AG04449 (cell line): ENCODE measurements at regions of chr6 and their contacts with region 1.

Region 1: DNA sequence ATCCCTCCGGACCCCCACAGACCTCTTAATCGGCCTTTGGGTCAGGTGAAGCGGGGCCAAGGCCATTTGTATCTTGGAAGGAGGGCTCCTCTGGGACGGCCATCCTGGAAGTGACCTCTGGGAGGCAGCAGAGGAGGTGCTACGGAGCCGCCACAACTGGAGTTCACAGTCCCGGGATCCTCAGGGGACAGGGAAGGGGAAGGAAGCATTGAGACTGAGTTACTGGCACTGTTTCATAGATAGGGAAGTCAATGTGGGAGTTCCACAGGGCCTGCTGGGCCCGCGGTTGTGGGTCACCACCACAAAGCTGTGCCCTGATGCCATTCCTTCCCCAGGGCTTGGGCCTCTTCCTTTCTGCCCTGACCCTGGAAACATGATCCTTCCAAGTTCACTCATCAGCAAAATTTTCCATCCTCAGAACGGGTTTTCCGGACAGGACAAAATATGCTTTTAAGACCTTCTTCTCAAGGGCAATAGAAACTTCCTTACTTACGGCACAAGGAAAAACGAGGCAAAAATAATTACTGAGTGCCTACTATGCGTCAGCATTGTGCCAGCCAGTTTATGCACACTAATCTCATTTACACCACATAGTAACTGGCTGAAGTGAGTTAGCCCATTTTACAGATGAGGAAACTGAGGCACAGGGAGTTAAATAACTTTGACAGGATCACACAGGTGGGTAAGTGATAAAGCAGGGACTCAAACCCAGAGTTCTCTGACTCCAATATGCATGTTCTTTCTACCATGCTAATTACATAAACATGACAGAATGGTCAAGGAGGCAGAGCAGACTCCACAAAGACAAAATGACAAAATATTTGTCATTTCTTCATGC is 143.8 kb downstream of the UNC5CL start:
- DNase-seq: no peak
- H3K4me3 ChIP-seq: no peak overlapping the region
- CTCF ChIP-seq: peak; percentile 90

Region 2: GRCh38 chr6:40308533-40309306 is 586.5 kb before region 1 on chr6:
- CTCF ChIA-PET with region 1: no interaction called
- POLR2A ChIA-PET with region 1: no interaction called
- DNase-seq: no peak
- H3K4me3 ChIP-seq: no peak overlapping the region
- CTCF ChIP-seq: peak; percentile 80

Region 3: DNA sequence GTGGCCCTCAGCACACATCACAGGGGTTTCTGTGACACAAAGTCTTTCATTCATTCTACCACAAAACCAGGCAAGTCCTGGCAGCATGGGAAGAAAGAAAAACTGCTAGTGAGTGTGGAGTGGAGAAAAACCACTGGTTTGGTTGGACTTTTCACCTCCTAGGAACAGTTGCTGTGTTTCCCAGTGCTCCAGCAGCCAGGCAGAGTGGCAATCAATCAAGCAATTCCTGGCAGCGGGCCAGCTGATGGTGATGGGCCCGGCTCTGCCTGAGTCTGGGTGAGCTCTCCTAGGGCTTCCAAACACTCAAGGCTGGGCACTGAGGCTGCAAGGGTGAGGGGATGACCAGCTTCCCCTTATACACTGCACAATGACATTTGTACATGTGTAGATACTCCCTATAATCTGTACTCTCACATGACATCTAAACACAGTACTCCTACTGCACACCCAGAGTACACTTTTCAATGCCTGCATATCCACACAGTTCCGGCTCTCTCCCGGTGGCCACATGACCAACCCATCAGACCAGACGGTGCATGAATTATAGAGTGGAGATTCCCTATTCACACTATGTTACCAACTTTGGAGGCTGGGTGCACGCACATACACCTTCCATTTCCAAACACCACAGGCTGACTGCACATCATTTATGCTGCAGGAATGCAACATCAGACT is 12.7 kb before region 1 on chr6:
- CTCF ChIA-PET with region 1: interaction called, 13 read pairs
- POLR2A ChIA-PET with region 1: no interaction called
- DNase-seq: no peak
- H3K4me3 ChIP-seq: no peak overlapping the region
- CTCF ChIP-seq: no peak

Region 4: DNA sequence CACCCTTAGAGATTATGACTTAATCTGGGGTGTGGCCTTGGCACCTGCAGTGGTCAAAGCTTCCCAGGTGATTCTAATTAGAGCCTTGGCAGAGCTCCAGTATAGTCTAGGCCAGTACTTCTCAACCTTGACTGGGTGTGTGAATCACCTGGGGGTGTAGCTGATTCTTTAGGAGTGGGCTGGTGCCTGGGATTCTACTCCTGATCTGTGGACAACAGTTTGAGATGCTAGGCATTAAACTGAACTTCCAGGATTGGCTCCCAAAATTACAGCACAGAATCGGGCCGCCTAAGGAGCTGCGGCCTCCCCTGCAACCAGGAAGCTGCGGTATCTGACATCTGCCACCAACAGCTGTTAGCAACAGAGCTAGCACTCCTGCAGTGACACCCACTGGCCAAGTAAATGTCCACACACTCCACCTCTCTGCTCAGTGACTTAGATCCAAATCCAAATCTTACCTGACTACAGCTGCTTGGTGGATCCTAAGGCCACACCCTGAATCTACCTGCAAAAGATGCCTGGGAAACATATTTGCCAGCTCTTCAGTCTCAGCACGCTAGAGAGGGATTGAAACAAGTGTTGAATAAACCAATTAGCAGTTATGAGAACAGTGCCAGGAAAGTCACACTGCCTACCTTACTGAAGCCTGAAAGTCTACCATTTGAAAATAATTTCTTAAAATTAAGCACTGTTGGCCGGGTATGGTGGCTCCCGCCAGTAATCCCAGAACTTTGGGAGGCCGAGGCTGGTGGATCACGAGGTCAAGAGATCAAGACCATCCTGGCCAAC is 17.2 kb after region 1 on chr6:
- CTCF ChIA-PET with region 1: interaction called, 10 read pairs
- POLR2A ChIA-PET with region 1: no interaction called
- DNase-seq: no peak
- H3K4me3 ChIP-seq: no peak overlapping the region
- CTCF ChIP-seq: peak; percentile 31

Region 5: GRCh38 chr6:40999569-40999968 is 104.4 kb after region 1 on chr6:
- CTCF ChIA-PET with region 1: interaction called, 12 read pairs
- POLR2A ChIA-PET with region 1: no interaction called
- DNase-seq: no peak
- H3K4me3 ChIP-seq: no peak overlapping the region
- CTCF ChIP-seq: peak; percentile 19

Region 6: GRCh38 chr6:41039060-41039998 is 144.1 kb after region 1 on chr6 and contains the start of gene UNC5CL:
- CTCF ChIA-PET with region 1: interaction called, 16 read pairs
- POLR2A ChIA-PET with region 1: no interaction called
- DNase-seq: no peak
- H3K4me3 ChIP-seq: no peak within 1 kb of the TSS
- CTCF ChIP-seq: peak; percentile 66